T-cell (primary cell): ENCODE measurements at regions of chr15 and their contacts with region 1.

Region 1: GRCh38 chr15:73964736-73965093 is 27.4 kb downstream of the STOML1 start:
- DNase-seq: peak; percentile 61 to 93 (median 83)
- ATAC-seq: peak; percentile 83 to 90 (median 89)
- H3K4me3 ChIP-seq: peak overlapping the region; percentile 46 to 52
- H3K4me3 Mint-ChIP-seq: peak overlapping the region; percentile 70 to 80 (median 75)
- H3K27ac ChIP-seq: peak overlapping the region; percentile 57
- H3K27ac Mint-ChIP-seq: peak overlapping the region; percentile 72 to 88
- H3K4me1 ChIP-seq: peaks cover 21 to 36% of the 10 kb centered on the region in 2 experiments
- H3K4me1 Mint-ChIP-seq: peaks cover 28 to 36% (median 35%) of the 10 kb centered on the region in 3 donors
- H3K27me3 ChIP-seq: no peaks in the 10 kb centered on the region
- H3K27me3 Mint-ChIP-seq: no peaks in the 10 kb centered on the region

Region 2: GRCh38 chr15:74308645-74308945 is 343.9 kb after region 1 on chr15:
- CTCF ChIA-PET with region 1: interaction called in 1 of 2 experiments, 10 read pairs
- POLR2A ChIA-PET with region 1: no interaction called
- DNase-seq: no peak
- ATAC-seq: no peak
- H3K4me3 ChIP-seq: no peak overlapping the region
- H3K4me3 Mint-ChIP-seq: no peak overlapping the region
- H3K27ac ChIP-seq: no peak overlapping the region
- H3K27ac Mint-ChIP-seq: no peak overlapping the region
- H3K4me1 ChIP-seq: peaks cover 0 to 2% of the 10 kb centered on the region in 2 experiments
- H3K4me1 Mint-ChIP-seq: peaks cover 0 to 1% (median under 1%) of the 10 kb centered on the region in 3 donors
- H3K27me3 ChIP-seq: peaks cover 0 to 54% of the 10 kb centered on the region in 2 experiments
- H3K27me3 Mint-ChIP-seq: peaks cover 15 to 42% of the 10 kb centered on the region in 2 donors